ENCODE measurements at regions of chr4 and their contacts with region 1.

Region 1: GRCh38 chr4:155667568-155668511 is 1.2 kb downstream of the GUCY1A1 start:
- DNase-seq: peak; percentile 45 to 85 (median 69)
- ATAC-seq: peak; percentile 41 to 88 (median 78)
- H3K4me3 ChIP-seq: peak overlapping the region; percentile 30 to 81 (median 71)
- H3K27ac ChIP-seq: peak overlapping the region; percentile 84 to 96 (median 92)
- H3K4me1 ChIP-seq: peaks cover 0 to 31% (median 14%) of the 10 kb centered on the region in 12 donors
- H3K27me3 ChIP-seq: peaks cover 0 to 9% (median 0%) of the 10 kb centered on the region in 9 donors
- CTCF ChIP-seq: no peak
- POLR2A ChIP-seq: peak in 1 of 2 donors; percentile 17

Region 2: GRCh38 chr4:155442267-155443105 is 225.4 kb before region 1 on chr4:
- intact Hi-C with region 1: loop called in 7 of 10 experiments (anchors 1 to 10 kb)
- DNase-seq: peak; percentile 76 to 90 (median 85)
- ATAC-seq: peak; percentile 76 to 95 (median 88)
- H3K4me3 ChIP-seq: peak overlapping the region in 9 of 12 donors; percentile 17 to 52 (median 33)
- H3K27ac ChIP-seq: peak overlapping the region in 10 of 12 donors; percentile 22 to 72 (median 38)
- H3K4me1 ChIP-seq: peaks cover 0 to 14% (median 3%) of the 10 kb centered on the region in 12 donors
- H3K27me3 ChIP-seq: no peaks in the 10 kb centered on the region
- CTCF ChIP-seq: peak; percentile 91 to 99 (median 97)
- POLR2A ChIP-seq: no peak

Region 3: GRCh38 chr4:155509555-155509954 is 158.3 kb before region 1 on chr4:
- intact Hi-C with region 1: loop called in 6 of 10 experiments (anchors 2 to 10 kb)
- DNase-seq: no peak
- ATAC-seq: peak in 3 of 4 donors; percentile 49 to 79 (median 62)
- H3K4me3 ChIP-seq: no peak overlapping the region
- H3K27ac ChIP-seq: peak overlapping the region in 11 of 12 donors; percentile 5 to 75 (median 57)
- H3K4me1 ChIP-seq: peaks cover 0 to 77% (median 39%) of the 10 kb centered on the region in 12 donors
- H3K27me3 ChIP-seq: no peaks in the 10 kb centered on the region
- CTCF ChIP-seq: no peak
- POLR2A ChIP-seq: no peak

Region 4: DNA sequence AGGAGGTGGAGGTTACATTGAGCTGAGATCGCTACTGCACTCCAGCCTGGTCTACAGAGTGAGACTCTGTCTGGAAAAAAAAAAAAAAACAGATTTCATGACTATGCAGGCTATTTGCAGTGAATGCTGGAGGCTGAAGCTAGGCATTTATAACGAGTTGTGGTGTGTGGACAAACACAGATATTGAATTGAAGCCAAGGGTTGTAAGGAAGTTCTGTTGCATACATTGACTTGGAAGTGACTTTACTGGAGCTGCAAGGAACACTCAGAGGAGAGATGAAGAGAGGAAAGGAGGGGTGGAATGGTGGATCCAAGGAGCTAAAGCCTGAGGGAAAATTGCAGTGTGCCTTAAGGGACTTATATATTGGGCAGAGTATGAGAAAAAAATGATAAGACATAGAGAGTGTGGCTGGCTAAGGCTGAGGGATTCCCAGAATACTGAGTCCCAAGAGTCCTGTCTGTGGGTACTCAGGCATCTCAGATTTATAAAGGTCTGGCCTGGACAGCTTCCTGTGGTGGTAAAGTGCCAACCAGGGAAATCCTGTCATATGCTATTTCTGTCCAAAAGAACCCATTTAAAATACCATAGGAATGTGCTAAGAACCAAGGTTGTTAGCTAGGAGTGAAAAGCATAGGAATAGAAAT is 89.0 kb before region 1 on chr4:
- intact Hi-C with region 1: loop called in 1 of 10 experiments (anchors 10 kb)
- DNase-seq: no peak
- ATAC-seq: peak; percentile 43 to 63 (median 46)
- H3K4me3 ChIP-seq: no peak overlapping the region
- H3K27ac ChIP-seq: peak overlapping the region in 1 of 12 donors; percentile 34
- H3K4me1 ChIP-seq: peaks cover 0 to 23% (median 9%) of the 10 kb centered on the region in 12 donors
- H3K27me3 ChIP-seq: no peaks in the 10 kb centered on the region
- CTCF ChIP-seq: no peak
- POLR2A ChIP-seq: no peak

Region 5: GRCh38 chr4:155592179-155592937 is 75.5 kb before region 1 on chr4:
- intact Hi-C with region 1: no loop called
- DNase-seq: no peak
- ATAC-seq: peak; percentile 62 to 87 (median 81)
- H3K4me3 ChIP-seq: no peak overlapping the region
- H3K27ac ChIP-seq: peak overlapping the region in 8 of 12 donors; percentile 4 to 68 (median 44)
- H3K4me1 ChIP-seq: peaks cover 0 to 27% (median 0%) of the 10 kb centered on the region in 12 donors
- H3K27me3 ChIP-seq: no peaks in the 10 kb centered on the region
- CTCF ChIP-seq: no peak
- POLR2A ChIP-seq: no peak

Region 6: GRCh38 chr4:155742310-155743015 is 74.6 kb after region 1 on chr4:
- intact Hi-C with region 1: no loop called
- DNase-seq: no peak
- ATAC-seq: no peak
- H3K4me3 ChIP-seq: no peak overlapping the region
- H3K27ac ChIP-seq: no peak overlapping the region
- H3K4me1 ChIP-seq: no peaks in the 10 kb centered on the region
- H3K27me3 ChIP-seq: no peaks in the 10 kb centered on the region
- CTCF ChIP-seq: no peak
- POLR2A ChIP-seq: no peak

Region 7: DNA sequence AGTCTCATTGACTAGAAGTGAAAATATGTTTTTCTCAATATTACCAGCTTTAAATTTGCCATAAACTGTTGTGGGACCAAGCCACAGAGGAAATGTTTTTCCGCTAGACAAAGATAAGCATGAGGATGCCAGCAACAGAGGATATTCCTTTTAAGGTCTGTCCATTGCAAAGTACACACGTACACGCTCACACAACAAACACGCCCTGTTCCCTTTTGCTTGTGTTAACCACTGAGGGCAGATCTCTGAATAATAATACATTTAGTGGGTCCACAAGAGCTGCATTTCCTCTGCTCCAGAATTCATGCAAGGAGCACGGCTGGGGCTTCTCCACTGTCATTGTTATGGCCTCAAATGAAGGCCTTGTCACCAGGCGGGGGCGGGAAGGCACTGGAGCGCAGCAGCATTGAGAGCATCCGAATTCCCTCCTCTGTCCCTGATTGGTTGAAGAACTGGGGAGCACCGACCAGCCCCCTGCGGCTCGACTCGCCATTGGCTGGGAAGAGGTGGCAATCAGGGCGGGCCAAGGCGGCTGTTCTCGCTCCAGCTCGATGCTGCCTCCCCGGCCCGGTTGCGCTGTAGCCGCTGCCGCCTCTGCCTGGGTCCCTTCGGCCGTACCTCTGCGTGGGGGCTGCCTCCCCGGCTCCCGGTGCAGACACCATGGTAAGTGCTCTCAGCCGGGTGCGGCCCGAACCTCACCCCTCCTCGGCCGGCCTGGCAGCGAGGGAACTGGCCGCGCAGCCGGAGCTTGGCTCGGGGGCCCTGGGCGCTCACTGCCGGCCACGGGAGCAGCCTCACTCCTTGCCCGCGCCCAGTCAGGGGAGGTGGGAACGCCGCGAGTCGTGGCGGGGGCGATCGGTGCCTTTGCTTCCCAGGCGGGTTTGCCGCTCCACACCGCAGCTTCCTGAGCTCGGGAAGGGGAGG is 90.9 kb after region 1 on chr4 and contains the start of gene GUCY1B1:
- intact Hi-C with region 1: loop called in 4 of 10 experiments (anchors 5 to 10 kb)
- DNase-seq: peak; percentile 97 to 98 (median 97)
- ATAC-seq: peak; percentile 99
- H3K4me3 ChIP-seq: peak within 1 kb of the TSS; percentile 58 to 90 (median 83)
- H3K27ac ChIP-seq: peak within 1 kb of the TSS; percentile 74 to 95 (median 90)
- H3K4me1 ChIP-seq: peaks cover 0 to 27% (median 5%) of the 10 kb centered on the region in 12 donors
- H3K27me3 ChIP-seq: peaks cover 0 to 6% (median 0%) of the 10 kb centered on the region in 9 donors
- CTCF ChIP-seq: peak; percentile 26 to 76 (median 48)
- POLR2A ChIP-seq: peak in 1 of 2 donors; percentile 67
- total RNA-seq, gene GUCY1B1: 14.6 to 30.7 (median 18.7) TPM

Region 8: DNA sequence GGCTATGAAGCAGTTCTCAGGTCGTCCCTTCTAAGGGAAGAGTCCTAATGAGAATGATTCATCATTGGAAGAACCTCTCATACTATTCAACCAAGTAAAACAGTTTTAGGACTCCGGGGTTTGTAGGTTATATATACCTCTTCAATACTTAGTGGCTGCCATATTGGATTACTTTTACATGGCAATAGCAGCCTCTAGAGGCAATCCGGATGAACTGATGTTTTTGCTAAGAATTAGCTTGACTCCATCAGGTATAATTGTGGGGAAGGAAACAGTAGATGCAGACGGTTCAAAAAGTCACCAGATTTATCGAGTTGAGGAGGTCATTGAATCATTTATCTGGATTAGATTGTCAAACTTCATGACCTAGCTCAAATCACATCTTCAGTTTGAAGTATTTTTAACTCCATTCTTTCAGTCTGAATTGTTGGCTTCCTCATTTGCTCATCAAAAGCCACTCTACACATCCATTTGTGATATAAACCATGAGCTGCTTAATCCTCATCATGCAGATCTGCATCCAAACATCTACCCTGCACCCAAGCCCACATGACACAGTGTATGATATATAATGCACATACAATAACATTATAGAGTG is 119.4 kb after region 1 on chr4:
- intact Hi-C with region 1: loop called in 2 of 10 experiments (anchors 5 to 10 kb)
- DNase-seq: no peak
- ATAC-seq: peak; percentile 38 to 91 (median 86)
- H3K4me3 ChIP-seq: no peak overlapping the region
- H3K27ac ChIP-seq: no peak overlapping the region
- H3K4me1 ChIP-seq: peaks cover 0 to 40% (median 7%) of the 10 kb centered on the region in 12 donors
- H3K27me3 ChIP-seq: no peaks in the 10 kb centered on the region
- CTCF ChIP-seq: peak; percentile 54 to 88 (median 76)
- POLR2A ChIP-seq: no peak

Measured in heart left ventricle (tissue), 16 donors.